Activated CD4-positive, alpha-beta T cell treated with anti-CD3 and anti-CD28 coated beads for 36 hours (primary cell): ENCODE measurements at regions of chr19 and their contacts with region 1.

Region 1: GRCh38 chr19:49073514-49074378 is 1.2 kb upstream of the KCNA7 start:
- DNase-seq: peak; percentile 49
- ATAC-seq: no peak
- H3K4me3 Mint-ChIP-seq: no peak overlapping the region
- H3K27ac Mint-ChIP-seq: no peak overlapping the region
- H3K4me1 Mint-ChIP-seq: peaks cover 7% of the 10 kb centered on the region
- H3K27me3 Mint-ChIP-seq: peaks cover 50% of the 10 kb centered on the region

Region 2: DNA sequence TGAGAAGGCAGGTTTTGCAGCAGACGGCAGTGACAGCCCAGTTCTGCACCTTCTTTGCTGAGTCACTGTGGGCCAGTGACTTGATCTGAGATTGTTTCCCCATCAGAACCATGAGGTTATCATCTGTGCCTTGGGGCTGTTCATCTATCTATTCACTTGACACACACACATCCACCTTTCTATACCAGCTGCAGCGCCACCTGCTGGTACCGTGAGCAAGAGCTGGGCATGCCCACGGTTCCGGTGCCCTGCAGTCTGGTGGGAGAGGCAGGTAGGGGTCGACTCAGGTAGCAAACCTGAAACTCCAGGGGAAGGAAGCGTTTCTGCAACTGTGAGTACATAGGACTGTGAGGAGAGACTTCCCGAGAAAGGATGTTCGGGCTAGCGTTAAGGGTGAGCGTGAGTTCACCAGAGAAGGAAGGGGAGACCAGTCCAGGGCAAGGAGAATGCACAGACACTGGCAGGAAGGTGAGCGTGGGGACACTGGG is 32.9 kb after region 1 on chr19:
- CTCF ChIA-PET with region 1: interaction called, 5 read pairs
- POLR2A ChIA-PET with region 1: no interaction called
- intact Hi-C with region 1: loop called in 1 of 2 experiments (anchors 1 kb)
- DNase-seq: peak; percentile 82
- ATAC-seq: peak; percentile 84
- H3K4me3 Mint-ChIP-seq: no peak overlapping the region
- H3K27ac Mint-ChIP-seq: no peak overlapping the region
- H3K4me1 Mint-ChIP-seq: peaks cover 4% of the 10 kb centered on the region
- H3K27me3 Mint-ChIP-seq: no peaks in the 10 kb centered on the region